HCT116 (cell line): ENCODE measurements at regions of chr22 and their contacts with region 1.

Region 1: GRCh38 chr22:36977947-36978660 is 41.1 kb downstream of the TST start:
- DNase-seq: peak; percentile 70
- ATAC-seq: peak; percentile 88
- H3K4me3 ChIP-seq: peak overlapping the region; percentile 35 to 48
- H3K27ac ChIP-seq: no peak overlapping the region
- H3K4me1 ChIP-seq: peaks cover 5 to 12% of the 10 kb centered on the region in 2 experiments
- H3K27me3 ChIP-seq: no peaks in the 10 kb centered on the region
- CTCF ChIP-seq: peak; percentile 80 to 97 (median 92)
- POLR2A ChIP-seq: peak; percentile 41
- RAD21 ChIP-seq: peak; percentile 96

Region 2: GRCh38 chr22:36546092-36546804 is 431.9 kb before region 1 on chr22:
- CTCF ChIA-PET with region 1: no interaction called
- POLR2A ChIA-PET with region 1: no interaction called
- RAD21 ChIA-PET with region 1: no interaction called
- intact Hi-C with region 1: loop called (anchors 5 kb)
- DNase-seq: peak; percentile 73
- ATAC-seq: peak; percentile 83
- H3K4me3 ChIP-seq: peak overlapping the region in 1 of 2 experiments; percentile 15; a peak in 1 of 4 replicates
- H3K27ac ChIP-seq: no peak overlapping the region
- H3K4me1 ChIP-seq: peaks cover 14 to 51% of the 10 kb centered on the region in 2 experiments
- H3K27me3 ChIP-seq: peaks cover 5% of the 10 kb centered on the region; the same call in 1 of the 2 replicates
- CTCF ChIP-seq: peak; percentile 55 to 67 (median 57); a peak in 4 of 6 replicates
- POLR2A ChIP-seq: no peak
- RAD21 ChIP-seq: peak; percentile 80

Region 3: GRCh38 chr22:36781656-36782627 is 196.2 kb before region 1 on chr22:
- CTCF ChIA-PET with region 1: interaction called, 19 read pairs
- POLR2A ChIA-PET with region 1: no interaction called
- RAD21 ChIA-PET with region 1: interaction called in 1 of 2 experiments, 3 read pairs
- intact Hi-C with region 1: loop called (anchors 1 kb)
- DNase-seq: peak; percentile 57
- ATAC-seq: peak; percentile 95
- H3K4me3 ChIP-seq: peak overlapping the region in 1 of 2 experiments; percentile 1; a peak in 1 of 4 replicates
- H3K27ac ChIP-seq: peak overlapping the region; percentile 14; the same call in 1 of the 2 replicates
- H3K4me1 ChIP-seq: peaks cover 2 to 13% of the 10 kb centered on the region in 2 experiments; a peak in 3 of 4 replicates
- H3K27me3 ChIP-seq: no peaks in the 10 kb centered on the region
- CTCF ChIP-seq: peak; percentile 86 to 96 (median 93)
- POLR2A ChIP-seq: no peak
- RAD21 ChIP-seq: peak; percentile 93

Region 4: GRCh38 chr22:36873680-36874537 is 104.2 kb before region 1 on chr22:
- CTCF ChIA-PET with region 1: interaction called, 8 read pairs
- POLR2A ChIA-PET with region 1: no interaction called
- RAD21 ChIA-PET with region 1: no interaction called
- intact Hi-C with region 1: loop called (anchors 5 kb)
- DNase-seq: peak; percentile 37
- ATAC-seq: peak; percentile 85
- H3K4me3 ChIP-seq: no peak overlapping the region
- H3K27ac ChIP-seq: no peak overlapping the region
- H3K4me1 ChIP-seq: peaks cover 24 to 48% of the 10 kb centered on the region in 2 experiments; a peak in 3 of 4 replicates
- H3K27me3 ChIP-seq: no peaks in the 10 kb centered on the region
- CTCF ChIP-seq: peak; percentile 53 to 63 (median 59); a peak in 5 of 6 replicates
- POLR2A ChIP-seq: no peak
- RAD21 ChIP-seq: peak; percentile 58

Region 5: DNA sequence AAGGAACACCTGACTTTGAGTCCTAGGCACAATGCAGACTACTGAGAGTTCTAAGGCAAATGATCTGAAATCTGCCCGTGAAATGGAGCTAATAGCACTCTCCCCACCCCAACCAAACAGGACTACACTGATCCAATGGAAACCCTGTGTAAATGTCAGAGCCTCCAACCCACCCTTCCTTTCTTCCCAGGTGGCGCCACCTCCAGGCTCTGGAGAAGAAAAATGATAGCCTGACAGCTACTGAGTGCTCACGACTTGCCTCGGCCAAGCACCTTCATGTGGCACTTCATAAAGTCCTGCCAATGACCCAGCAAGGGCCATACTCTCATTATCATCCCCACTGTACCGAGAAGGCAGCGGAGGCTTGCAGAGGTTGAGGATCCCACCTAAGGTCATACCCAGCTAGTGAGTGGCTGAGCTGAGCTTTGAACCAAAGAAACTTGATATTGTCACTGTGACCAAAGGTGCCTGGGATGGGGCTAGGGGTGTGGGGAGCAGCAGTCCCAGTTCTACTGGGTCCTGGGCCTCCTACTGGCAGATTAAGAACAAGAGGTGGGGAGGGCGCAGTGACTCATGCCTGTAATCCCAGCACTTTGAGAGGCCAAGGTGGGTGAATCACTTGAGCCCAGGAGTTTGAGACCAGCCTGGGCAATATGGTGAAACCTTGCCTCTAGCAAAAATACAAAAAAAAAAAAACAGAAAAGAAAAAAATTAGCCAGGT is 20.7 kb after region 1 on chr22:
- CTCF ChIA-PET with region 1: interaction called, 12 read pairs
- POLR2A ChIA-PET with region 1: no interaction called
- RAD21 ChIA-PET with region 1: no interaction called
- intact Hi-C with region 1: no loop called
- DNase-seq: peak; percentile 58
- ATAC-seq: peak; percentile 89
- H3K4me3 ChIP-seq: peak overlapping the region; percentile 8 to 20; a peak in 2 of 4 replicates
- H3K27ac ChIP-seq: peak overlapping the region; percentile 56
- H3K4me1 ChIP-seq: peaks cover 17 to 29% of the 10 kb centered on the region in 2 experiments
- H3K27me3 ChIP-seq: no peaks in the 10 kb centered on the region
- CTCF ChIP-seq: peak; percentile 33 to 59 (median 45); a peak in 5 of 6 replicates
- POLR2A ChIP-seq: peak; percentile 13
- RAD21 ChIP-seq: no peak; the same call in none of the 2 replicates

Region 6: GRCh38 chr22:37126882-37127281 is 148.8 kb after region 1 on chr22:
- CTCF ChIA-PET with region 1: no interaction called
- POLR2A ChIA-PET with region 1: no interaction called
- RAD21 ChIA-PET with region 1: no interaction called
- intact Hi-C with region 1: no loop called
- DNase-seq: no peak
- ATAC-seq: peak; percentile 64
- H3K4me3 ChIP-seq: no peak overlapping the region
- H3K27ac ChIP-seq: no peak overlapping the region
- H3K4me1 ChIP-seq: peaks cover 0 to 21% of the 10 kb centered on the region in 2 experiments; a peak in 2 of 4 replicates
- H3K27me3 ChIP-seq: no peaks in the 10 kb centered on the region
- CTCF ChIP-seq: peak; percentile 52 to 70 (median 64); a peak in 5 of 6 replicates
- POLR2A ChIP-seq: no peak
- RAD21 ChIP-seq: peak; percentile 63